Aorta (tissue), 5 donors: ENCODE measurements at regions of chr7 and their contacts with region 1.

Region 1: DNA sequence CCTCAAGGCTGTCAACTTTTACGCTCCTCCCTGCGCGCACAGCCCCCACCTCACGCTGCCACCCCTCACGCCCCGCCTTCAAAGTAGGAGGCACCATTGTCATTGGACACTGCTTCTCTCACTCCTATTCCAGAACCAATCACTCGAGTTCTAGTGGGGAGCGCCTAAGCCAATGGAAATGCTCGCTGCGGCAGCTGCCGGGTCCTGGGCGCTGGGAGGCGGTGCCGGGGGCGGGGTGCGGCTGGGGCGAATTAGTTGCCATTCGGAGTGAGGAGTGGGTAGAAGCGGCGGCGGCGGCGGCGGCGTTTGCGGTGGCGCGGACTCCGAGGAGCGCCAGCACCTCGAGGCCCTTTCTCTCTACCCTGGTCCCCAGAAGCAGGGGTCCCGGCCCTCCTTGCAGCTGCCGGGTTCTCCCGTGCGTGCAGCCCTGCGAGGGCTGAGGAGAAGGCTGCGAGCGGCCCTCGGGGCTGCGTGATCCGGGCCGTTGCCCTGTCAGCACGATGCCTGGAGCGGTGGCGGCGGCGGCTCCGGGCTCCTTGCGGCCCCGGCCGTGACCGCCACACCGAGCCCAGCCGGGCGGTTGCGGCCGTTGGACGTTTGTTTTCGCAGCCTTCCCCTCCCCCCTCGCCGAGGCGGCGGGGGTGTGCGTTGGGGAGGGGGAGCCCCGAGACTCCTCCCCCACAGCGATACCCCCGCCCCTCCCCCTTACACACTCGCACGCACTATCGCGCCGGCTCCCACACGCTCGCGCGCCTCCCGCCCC is at the start of gene GLCCI1:
- DNase-seq: peak; percentile 98
- ATAC-seq: peak; percentile 98
- H3K4me3 ChIP-seq: peak within 1 kb of the TSS; percentile 81 to 90
- H3K27ac ChIP-seq: peak within 1 kb of the TSS; percentile 32 to 85
- H3K4me1 ChIP-seq: peaks cover 0 to 2% of the 10 kb centered on the region in 2 donors
- H3K27me3 ChIP-seq: no peaks in the 10 kb centered on the region
- total RNA-seq, gene GLCCI1: 8.4 to 12.0 TPM

Region 2: GRCh38 chr7:7182156-7183060 is 786.3 kb before region 1 on chr7 and contains the start of gene C1GALT1:
- intact Hi-C with region 1: loop called in 1 of 2 experiments (anchors 10 kb)
- DNase-seq: peak; percentile 98 to 99
- ATAC-seq: peak; percentile 99
- H3K4me3 ChIP-seq: peak within 1 kb of the TSS; percentile 74 to 94
- H3K27ac ChIP-seq: peak within 1 kb of the TSS; percentile 94 to 97
- H3K4me1 ChIP-seq: no peaks in the 10 kb centered on the region
- H3K27me3 ChIP-seq: no peaks in the 10 kb centered on the region
- total RNA-seq, gene C1GALT1: 21.9 to 43.8 TPM

Region 3: DNA sequence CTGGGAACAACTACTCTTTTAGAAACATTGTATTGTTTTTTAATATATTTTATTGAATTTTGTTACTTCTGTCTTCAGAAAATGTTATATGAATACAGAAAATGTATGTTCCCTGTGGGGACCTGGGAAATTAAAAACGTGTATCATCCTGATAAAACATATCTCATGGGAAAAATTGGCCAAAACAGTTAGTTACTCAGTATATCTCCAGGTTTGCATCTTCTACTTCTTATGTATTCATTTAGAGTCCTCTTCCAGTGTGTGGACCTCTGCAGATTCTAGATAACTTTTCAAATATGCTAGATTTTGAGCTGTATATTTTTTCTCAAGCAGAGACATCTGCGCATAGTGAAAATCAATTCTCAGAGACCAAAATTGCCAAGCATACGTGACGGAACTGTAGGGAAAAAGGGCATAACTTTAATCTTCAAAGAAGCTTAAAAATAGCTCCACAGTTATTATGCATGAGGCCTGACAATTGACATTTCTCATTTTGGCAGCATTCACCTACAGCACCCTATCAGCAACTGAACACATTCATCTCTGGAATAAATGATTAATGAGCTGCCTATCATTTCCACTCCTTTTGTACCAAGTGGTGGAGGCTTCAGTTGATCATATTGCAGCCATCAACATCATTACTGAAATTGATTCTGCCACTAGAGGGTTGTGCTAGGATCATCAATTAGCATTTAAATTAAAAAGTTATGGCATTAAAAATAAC is 354.5 kb before region 1 on chr7:
- intact Hi-C with region 1: no loop called
- DNase-seq: no peak
- ATAC-seq: no peak
- H3K4me3 ChIP-seq: no peak overlapping the region
- H3K27ac ChIP-seq: no peak overlapping the region
- H3K4me1 ChIP-seq: no peaks in the 10 kb centered on the region
- H3K27me3 ChIP-seq: no peaks in the 10 kb centered on the region

Region 4: GRCh38 chr7:8065356-8065813 is 96.7 kb after region 1 on chr7:
- intact Hi-C with region 1: loop called (anchors 5 kb)
- DNase-seq: no peak
- ATAC-seq: peak; percentile 60
- H3K4me3 ChIP-seq: no peak overlapping the region
- H3K27ac ChIP-seq: peak overlapping the region in 1 of 2 donors; percentile 4
- H3K4me1 ChIP-seq: no peaks in the 10 kb centered on the region
- H3K27me3 ChIP-seq: no peaks in the 10 kb centered on the region